ENCODE measurements at regions of chr3 and their contacts with region 1.

Region 1: GRCh38 chr3:31485196-31485595 is 47.5 kb upstream of the STT3B start:
- DNase-seq: no peak
- ATAC-seq: no peak
- H3K4me3 ChIP-seq: no peak overlapping the region
- H3K4me3 Mint-ChIP-seq: no peak overlapping the region
- H3K27ac ChIP-seq: no peak overlapping the region
- H3K27ac Mint-ChIP-seq: no peak overlapping the region
- H3K4me1 ChIP-seq: no peaks in the 10 kb centered on the region
- H3K4me1 Mint-ChIP-seq: no peaks in the 10 kb centered on the region
- H3K27me3 ChIP-seq: no peaks in the 10 kb centered on the region
- H3K27me3 Mint-ChIP-seq: no peaks in the 10 kb centered on the region
- CTCF ChIP-seq: no peak

Region 2: DNA sequence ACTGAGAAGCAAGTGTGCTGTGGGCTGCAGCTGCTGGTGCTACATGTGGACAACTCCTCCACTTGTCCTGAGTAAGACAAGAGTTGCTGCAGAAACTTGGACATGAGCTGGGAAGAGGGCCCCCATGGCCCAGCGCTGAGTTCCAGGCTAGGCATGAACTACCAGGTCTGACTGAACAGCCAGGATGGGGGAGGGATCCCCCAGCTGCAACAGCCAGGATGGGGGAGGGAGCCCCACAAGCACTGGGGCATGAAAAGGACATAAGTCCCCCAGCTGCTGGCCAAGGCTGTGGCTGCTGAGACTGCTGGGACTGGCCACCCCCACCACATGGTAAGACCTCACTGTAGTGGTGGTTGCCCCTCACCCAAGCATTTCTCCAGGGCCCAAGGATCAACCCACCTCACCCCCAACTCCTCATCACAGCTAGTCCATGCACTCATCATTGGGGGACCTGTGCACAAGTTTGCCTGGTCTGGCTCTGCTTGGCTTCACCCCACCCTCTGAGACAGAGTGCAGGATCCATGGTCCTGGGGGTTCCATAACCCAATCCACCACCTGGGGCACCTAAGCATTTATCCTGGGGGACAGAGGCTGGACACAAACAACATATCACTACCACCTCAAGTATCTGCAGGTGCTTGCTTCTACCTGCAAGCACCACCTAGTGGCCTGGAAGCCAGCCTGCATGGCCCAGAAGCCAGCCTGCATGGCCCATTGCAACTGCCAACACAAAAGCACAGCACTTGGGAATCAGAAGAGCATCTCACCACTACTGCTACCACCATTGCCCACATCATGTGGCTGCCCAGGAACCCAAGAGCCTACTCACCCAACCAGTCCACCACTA is 36.9 kb before region 1 on chr3:
- CTCF ChIA-PET with region 1: no interaction called
- POLR2A ChIA-PET with region 1: no interaction called
- intact Hi-C with region 1: loop called in 1 of 2 experiments (anchors 5 kb)
- DNase-seq: peak in 7 of 14 experiments; percentile 12 to 58 (median 33)
- ATAC-seq: peak; percentile 34
- H3K4me3 ChIP-seq: no peak overlapping the region
- H3K4me3 Mint-ChIP-seq: no peak overlapping the region
- H3K27ac ChIP-seq: no peak overlapping the region
- H3K27ac Mint-ChIP-seq: no peak overlapping the region
- H3K4me1 ChIP-seq: peaks cover 11% of the 10 kb centered on the region
- H3K4me1 Mint-ChIP-seq: peaks cover 30% of the 10 kb centered on the region
- H3K27me3 ChIP-seq: no peaks in the 10 kb centered on the region
- H3K27me3 Mint-ChIP-seq: no peaks in the 10 kb centered on the region
- CTCF ChIP-seq: no peak

Region 3: DNA sequence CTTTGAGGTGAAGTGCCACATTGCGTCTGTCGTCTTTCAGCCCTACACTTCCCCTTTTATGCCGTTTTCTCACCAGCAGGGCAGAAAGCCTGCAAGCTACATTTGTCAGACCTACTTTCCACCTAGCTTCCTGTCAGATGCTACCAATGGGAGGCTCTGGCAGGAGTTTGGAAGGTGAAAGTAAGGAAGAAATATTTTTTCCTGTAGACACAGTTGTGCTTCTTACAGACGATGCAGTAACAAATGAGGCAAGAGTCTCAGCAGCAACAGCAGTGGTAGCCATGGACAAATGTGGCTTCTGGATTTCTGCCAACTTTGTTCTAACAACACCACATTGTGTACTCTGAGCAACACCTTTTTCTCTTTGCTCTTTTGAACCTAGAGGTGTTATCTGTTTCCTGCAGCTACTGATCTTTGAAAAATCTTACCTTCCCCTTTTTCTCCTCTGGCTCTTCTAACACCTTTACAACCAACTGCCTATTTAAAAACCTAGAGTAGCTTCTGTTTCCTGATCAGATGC is 23.1 kb before region 1 on chr3:
- CTCF ChIA-PET with region 1: no interaction called
- POLR2A ChIA-PET with region 1: interaction called, 3 read pairs
- intact Hi-C with region 1: loop called in 1 of 2 experiments (anchors 2 kb)
- DNase-seq: peak in 13 of 14 experiments; percentile 9 to 89 (median 40)
- ATAC-seq: peak; percentile 85
- H3K4me3 ChIP-seq: peak overlapping the region; percentile 30
- H3K4me3 Mint-ChIP-seq: peak overlapping the region; percentile 72
- H3K27ac ChIP-seq: peak overlapping the region; percentile 54 to 74
- H3K27ac Mint-ChIP-seq: peak overlapping the region; percentile 90
- H3K4me1 ChIP-seq: peaks cover 54% of the 10 kb centered on the region
- H3K4me1 Mint-ChIP-seq: peaks cover 74% of the 10 kb centered on the region
- H3K27me3 ChIP-seq: no peaks in the 10 kb centered on the region
- H3K27me3 Mint-ChIP-seq: no peaks in the 10 kb centered on the region
- CTCF ChIP-seq: peak; percentile 42